PC-3 (cell line): ENCODE measurements at regions of chr6 and their contacts with region 1.

Region 1: GRCh38 chr6:133047065-133047665 is 194.0 kb upstream of the EYA4 start:
- DNase-seq: no peak
- ATAC-seq: no peak
- H3K4me3 ChIP-seq: no peak overlapping the region
- H3K27ac ChIP-seq: no peak overlapping the region
- H3K4me1 ChIP-seq: no peaks in the 10 kb centered on the region
- H3K27me3 ChIP-seq: no peaks in the 10 kb centered on the region
- CTCF ChIP-seq: no peak

Region 2: DNA sequence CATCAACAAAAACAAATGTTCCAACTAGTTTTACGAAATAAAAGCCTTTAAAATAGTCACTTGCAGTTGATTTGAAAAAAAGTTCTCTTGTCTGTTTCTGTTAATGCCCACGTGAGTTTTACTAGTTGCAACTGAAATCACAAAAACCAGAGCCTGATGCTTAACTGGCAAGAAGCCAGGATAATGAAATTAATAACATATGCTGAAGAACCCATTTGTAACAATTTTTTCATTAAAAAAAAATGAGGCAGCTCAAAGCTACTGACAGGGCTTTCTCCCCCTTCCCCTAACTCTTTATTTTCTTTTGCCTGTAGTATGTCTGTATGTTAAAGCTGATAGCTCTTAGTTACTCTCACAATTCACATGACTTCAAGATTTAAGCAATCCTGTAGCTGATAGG is 61.3 kb after region 1 on chr6:
- CTCF ChIA-PET with region 1: no interaction called
- POLR2A ChIA-PET with region 1: no interaction called
- intact Hi-C with region 1: no loop called
- DNase-seq: no peak
- ATAC-seq: no peak
- H3K4me3 ChIP-seq: no peak overlapping the region
- H3K27ac ChIP-seq: no peak overlapping the region
- H3K4me1 ChIP-seq: no peaks in the 10 kb centered on the region
- H3K27me3 ChIP-seq: no peaks in the 10 kb centered on the region
- CTCF ChIP-seq: no peak

Region 3: GRCh38 chr6:133474516-133474915 is 427.4 kb after region 1 on chr6:
- CTCF ChIA-PET with region 1: no interaction called
- POLR2A ChIA-PET with region 1: no interaction called
- intact Hi-C with region 1: no loop called
- DNase-seq: no peak
- ATAC-seq: no peak
- H3K4me3 ChIP-seq: no peak overlapping the region
- H3K27ac ChIP-seq: no peak overlapping the region
- H3K4me1 ChIP-seq: no peaks in the 10 kb centered on the region
- H3K27me3 ChIP-seq: no peaks in the 10 kb centered on the region
- CTCF ChIP-seq: no peak

Region 4: DNA sequence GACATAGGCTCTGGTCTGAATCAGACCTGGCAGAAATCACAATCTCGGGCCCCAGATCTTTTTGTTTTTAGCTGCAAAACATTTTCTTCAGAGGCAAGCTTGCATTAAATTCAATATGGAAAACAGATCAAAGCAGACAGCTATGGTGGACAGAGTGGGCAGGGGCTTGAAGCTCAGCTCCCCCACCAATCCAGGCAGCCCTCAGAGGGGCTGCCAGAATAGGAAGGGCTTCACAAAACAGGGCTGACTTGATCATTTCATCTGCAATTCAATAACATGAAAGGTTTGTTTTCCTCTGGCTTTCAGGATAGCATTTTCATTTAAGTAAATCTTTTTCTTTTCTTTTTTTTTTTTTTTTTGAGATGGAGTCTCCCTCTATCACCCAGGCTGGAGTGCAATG is 1951.9 kb after region 1 on chr6:
- CTCF ChIA-PET with region 1: interaction called, 12 read pairs
- POLR2A ChIA-PET with region 1: no interaction called
- intact Hi-C with region 1: no loop called
- DNase-seq: no peak
- ATAC-seq: no peak
- H3K4me3 ChIP-seq: no peak overlapping the region
- H3K27ac ChIP-seq: no peak overlapping the region
- H3K4me1 ChIP-seq: no peaks in the 10 kb centered on the region
- H3K27me3 ChIP-seq: no peaks in the 10 kb centered on the region
- CTCF ChIP-seq: no peak